CD4-positive, alpha-beta T cell (primary cell): ENCODE measurements at regions of chr2 and their contacts with region 1.

Region 1: DNA sequence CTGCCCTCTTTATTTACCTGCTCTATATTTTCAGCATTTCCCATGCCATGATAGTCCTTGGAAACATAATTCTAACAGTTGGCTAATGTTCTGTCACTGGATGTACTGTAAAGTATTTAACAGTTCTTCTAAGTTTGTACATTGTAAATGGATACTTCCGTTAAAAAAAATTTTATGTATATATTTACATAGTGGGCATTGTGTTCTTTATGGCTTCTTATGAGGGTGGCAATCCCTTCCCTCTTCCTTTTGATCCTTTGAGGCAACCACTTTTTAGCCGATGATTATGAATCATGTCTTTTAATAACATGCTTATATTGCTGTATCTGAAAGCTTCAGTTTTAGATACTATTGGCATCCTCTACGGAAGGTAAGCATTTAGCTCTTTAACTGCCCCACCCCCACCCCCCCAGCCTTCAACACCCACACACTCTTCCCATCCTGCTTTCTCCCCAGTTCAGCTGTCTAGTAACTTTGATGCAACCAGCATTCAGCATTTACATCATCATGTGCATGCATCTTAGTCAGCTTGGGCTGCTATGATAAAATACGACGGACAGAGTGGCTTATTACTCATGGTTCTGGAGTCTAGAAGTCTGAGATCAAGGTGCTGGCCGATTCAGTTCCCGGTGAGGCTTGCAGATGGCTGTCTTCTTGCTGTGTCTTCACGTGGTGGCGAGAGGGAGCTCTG is 21.0 kb upstream of the EDAR start:
- DNase-seq: no peak
- ATAC-seq: no peak
- H3K4me3 ChIP-seq: no peak overlapping the region
- H3K4me3 Mint-ChIP-seq: no peak overlapping the region
- H3K27ac ChIP-seq: no peak overlapping the region
- H3K27ac Mint-ChIP-seq: no peak overlapping the region
- H3K4me1 ChIP-seq: no peaks in the 10 kb centered on the region
- H3K4me1 Mint-ChIP-seq: peaks cover 35% of the 10 kb centered on the region
- H3K27me3 ChIP-seq: no peaks in the 10 kb centered on the region
- H3K27me3 Mint-ChIP-seq: no peaks in the 10 kb centered on the region
- CTCF ChIP-seq: no peak

Region 2: GRCh38 chr2:108971661-108972566 is 38.2 kb before region 1 on chr2:
- CTCF ChIA-PET with region 1: no interaction called
- POLR2A ChIA-PET with region 1: no interaction called
- intact Hi-C with region 1: no loop called
- DNase-seq: no peak
- ATAC-seq: peak; percentile 55
- H3K4me3 ChIP-seq: no peak overlapping the region
- H3K4me3 Mint-ChIP-seq: peak overlapping the region; percentile 51
- H3K27ac ChIP-seq: no peak overlapping the region
- H3K27ac Mint-ChIP-seq: peak overlapping the region; percentile 45
- H3K4me1 ChIP-seq: peaks cover 53% of the 10 kb centered on the region
- H3K4me1 Mint-ChIP-seq: peaks cover 90% of the 10 kb centered on the region
- H3K27me3 ChIP-seq: no peaks in the 10 kb centered on the region
- H3K27me3 Mint-ChIP-seq: no peaks in the 10 kb centered on the region
- CTCF ChIP-seq: no peak

Region 3: DNA sequence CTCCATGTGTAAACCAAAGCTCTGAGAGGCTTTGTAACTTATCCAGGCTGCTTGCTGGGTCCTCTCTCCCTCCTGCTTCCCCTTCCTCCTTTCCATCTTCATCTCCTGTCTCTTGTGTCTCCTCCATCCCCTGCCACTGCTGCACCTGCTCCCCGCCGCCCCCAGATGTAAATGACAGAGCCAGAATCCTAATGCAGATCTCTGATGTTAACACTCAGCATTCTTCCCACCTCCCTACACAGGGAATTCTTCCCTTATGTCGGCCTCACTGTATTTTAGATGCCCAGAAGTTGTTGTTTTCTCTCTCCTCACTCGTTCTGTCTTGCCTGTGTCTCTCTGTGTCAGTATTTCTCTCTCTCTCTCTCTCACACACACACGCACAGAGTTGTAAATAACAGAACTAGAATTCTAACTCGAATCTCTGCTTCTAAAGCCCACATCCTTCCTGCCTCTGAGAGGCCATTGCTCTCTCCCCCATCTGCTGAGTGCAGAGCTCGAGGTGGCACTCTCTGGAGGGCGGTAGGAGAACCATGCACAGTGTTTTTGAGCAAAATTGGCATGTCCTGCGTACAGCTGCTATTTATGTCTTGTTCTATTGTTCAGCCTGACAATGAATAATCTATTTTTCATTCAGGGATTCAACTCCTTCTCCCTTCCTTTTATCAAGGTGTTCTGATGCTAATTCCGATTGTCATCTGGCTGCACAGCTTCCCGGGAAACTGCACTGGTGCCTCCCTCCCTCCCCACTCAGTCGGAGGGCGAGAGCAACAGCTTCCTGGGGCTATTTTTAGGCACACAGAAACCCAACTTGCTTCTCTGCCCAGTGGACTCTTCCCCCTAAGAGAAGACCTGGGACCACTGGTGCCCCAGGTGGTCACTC is 338.8 kb after region 1 on chr2:
- CTCF ChIA-PET with region 1: no interaction called
- POLR2A ChIA-PET with region 1: no interaction called
- intact Hi-C with region 1: loop called in 1 of 2 experiments (anchors 10 kb)
- DNase-seq: peak; percentile 36 to 79 (median 56)
- ATAC-seq: peak; percentile 99
- H3K4me3 ChIP-seq: peak overlapping the region; percentile 19
- H3K4me3 Mint-ChIP-seq: peak overlapping the region; percentile 28
- H3K27ac ChIP-seq: peak overlapping the region; percentile 64 to 69
- H3K27ac Mint-ChIP-seq: peak overlapping the region; percentile 87
- H3K4me1 ChIP-seq: peaks cover 44% of the 10 kb centered on the region
- H3K4me1 Mint-ChIP-seq: peaks cover 50% of the 10 kb centered on the region
- H3K27me3 ChIP-seq: no peaks in the 10 kb centered on the region
- H3K27me3 Mint-ChIP-seq: no peaks in the 10 kb centered on the region
- CTCF ChIP-seq: no peak